Gastrocnemius medialis (tissue), 4 donors: ENCODE measurements at regions of chr5 and their contacts with region 1.

Region 1: GRCh38 chr5:64784451-64785025 is 15.8 kb downstream of the CWC27 start:
- DNase-seq: peak; percentile 18 to 47
- ATAC-seq: peak; percentile 52 to 81
- H3K4me3 ChIP-seq: no peak overlapping the region
- H3K27ac ChIP-seq: no peak overlapping the region
- H3K4me1 ChIP-seq: no peaks in the 10 kb centered on the region
- H3K27me3 ChIP-seq: no peaks in the 10 kb centered on the region
- CTCF ChIP-seq: peak; percentile 73 to 84 (median 78)
- POLR2A ChIP-seq: no peak

Region 2: DNA sequence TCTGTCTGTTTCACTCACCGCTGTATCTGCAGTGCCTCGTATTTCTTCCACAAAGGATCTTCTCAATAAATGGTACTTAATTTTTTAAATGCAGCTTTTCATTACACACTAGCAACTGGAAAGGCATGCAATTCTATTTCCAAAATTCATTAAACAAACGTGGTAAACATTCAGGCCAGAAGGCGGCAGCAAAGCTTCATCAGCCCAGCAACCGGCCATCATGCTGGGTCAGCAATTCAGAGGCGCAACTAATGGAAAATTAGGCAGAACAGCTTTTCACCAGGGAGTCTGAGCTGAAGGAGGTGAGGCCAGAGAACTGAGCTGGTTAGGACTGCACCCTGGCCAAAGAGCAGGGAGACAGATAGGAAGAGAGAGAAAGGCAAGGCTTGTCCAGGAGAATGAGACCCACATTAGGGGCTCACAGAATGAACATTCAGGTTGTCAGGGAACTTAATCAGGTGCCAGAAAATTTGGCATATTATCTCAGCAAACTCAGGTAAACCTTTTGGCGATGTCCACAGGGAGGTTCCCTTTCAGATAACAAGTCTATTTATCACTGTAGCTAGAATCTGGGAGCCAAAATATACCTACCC is 636.6 kb before region 1 on chr5:
- in situ Hi-C with region 1: no loop called
- intact Hi-C with region 1: loop called (anchors 10 kb)
- DNase-seq: peak; percentile 16 to 25
- ATAC-seq: peak in 1 of 2 donors; percentile 65
- H3K4me3 ChIP-seq: no peak overlapping the region
- H3K27ac ChIP-seq: no peak overlapping the region
- H3K4me1 ChIP-seq: peaks cover 3 to 4% of the 10 kb centered on the region in 2 donors
- H3K27me3 ChIP-seq: no peaks in the 10 kb centered on the region
- CTCF ChIP-seq: peak; percentile 62 to 77 (median 71)
- POLR2A ChIP-seq: no peak

Region 3: DNA sequence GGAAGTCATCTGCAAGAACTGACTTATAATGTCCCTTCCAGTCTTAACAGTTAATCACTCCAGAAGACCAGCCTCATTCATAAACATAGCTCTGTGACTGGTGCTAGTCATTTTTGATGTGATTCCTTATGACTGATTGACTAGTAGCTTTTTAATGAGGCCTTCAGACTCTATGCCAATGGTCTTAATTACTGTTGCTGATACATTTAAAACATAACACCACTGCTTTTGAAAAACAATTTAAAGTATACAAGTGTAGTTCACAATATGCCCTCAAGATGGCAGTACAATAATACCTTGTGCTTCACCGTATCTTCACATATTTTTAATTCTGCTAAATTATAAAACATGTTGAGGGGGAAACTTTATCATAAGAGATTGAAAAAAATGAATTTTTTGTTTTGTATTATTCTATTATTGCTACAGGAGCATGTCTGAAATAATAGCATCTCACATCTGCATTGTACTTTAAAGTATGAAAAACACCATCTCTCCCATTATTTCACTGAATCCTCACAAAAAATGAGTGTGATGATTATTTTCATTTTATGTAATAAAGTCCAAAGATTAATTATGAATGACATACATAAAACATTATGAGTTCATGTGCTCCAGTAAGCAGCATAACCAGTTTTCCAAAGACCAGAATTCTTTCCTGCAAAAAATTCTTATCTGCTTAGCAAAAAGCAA is 149.4 kb before region 1 on chr5:
- in situ Hi-C with region 1: loop called (anchors 5 kb)
- intact Hi-C with region 1: loop called (anchors 1 kb)
- DNase-seq: no peak
- ATAC-seq: peak in 1 of 2 donors; percentile 44
- H3K4me3 ChIP-seq: no peak overlapping the region
- H3K27ac ChIP-seq: no peak overlapping the region
- H3K4me1 ChIP-seq: no peaks in the 10 kb centered on the region
- H3K27me3 ChIP-seq: no peaks in the 10 kb centered on the region
- CTCF ChIP-seq: peak; percentile 51 to 78 (median 70)
- POLR2A ChIP-seq: no peak